ENCODE measurements at regions of chr2 and their contacts with region 1.

Region 1: GRCh38 chr2:172713365-172713875 is 22.2 kb upstream of the RAPGEF4 start:
- DNase-seq: no peak

Region 2: GRCh38 chr2:172735582-172736423 is 22.4 kb after region 1 on chr2 and contains the start of gene RAPGEF4:
- intact Hi-C with region 1: loop called in 1 of 2 experiments (anchors 1 kb)
- DNase-seq: no peak
- total RNA-seq, gene RAPGEF4: 4.5 to 6.2 TPM

Region 3: DNA sequence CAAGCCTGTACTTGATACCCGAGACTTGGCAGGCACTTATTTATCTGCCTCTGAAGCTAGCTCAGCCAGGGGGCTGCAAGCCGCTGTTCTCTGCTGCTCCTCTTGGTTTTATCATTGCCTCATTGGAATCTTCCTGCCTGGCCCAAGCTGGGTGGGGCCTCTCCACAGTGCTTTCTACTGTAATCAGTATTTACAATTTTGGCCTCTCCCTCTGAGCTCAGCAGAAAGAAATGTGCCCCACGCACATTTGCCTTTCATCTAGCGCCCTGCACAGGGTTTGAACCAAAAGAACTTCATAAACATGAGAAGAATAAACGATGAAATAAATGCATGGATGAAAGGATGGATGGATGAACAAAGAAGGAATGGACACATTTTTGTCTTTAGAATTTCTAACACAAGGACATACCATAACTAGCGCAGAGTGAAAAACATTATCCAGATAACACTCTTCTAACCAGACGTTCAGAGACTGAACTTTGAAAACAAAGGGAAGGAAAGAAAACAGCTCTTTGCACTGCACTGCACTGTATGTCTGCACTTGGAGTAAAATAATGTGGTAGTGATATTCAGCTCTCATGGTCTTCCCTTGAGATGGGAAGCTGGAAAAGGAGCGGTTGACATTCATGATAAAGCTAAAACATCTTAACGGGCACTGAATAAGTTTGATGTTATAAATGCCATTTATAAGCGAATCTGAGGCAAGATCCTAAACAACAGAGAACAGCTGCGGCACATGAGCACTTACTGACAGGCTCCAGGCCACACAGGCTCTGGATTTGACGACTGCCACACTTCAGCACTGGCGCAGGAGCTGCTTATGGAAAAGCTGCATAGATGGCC is 1338.5 kb after region 1 on chr2:
- intact Hi-C with region 1: no loop called
- DNase-seq: no peak

Measured in posterior vena cava (tissue), 2 donors.